AG04449 (cell line): ENCODE measurements at regions of chr16 and their contacts with region 1.

Region 1: GRCh38 chr16:84970447-84971127 is 40.7 kb downstream of the ZDHHC7 start:
- DNase-seq: peak; percentile 16
- H3K4me3 ChIP-seq: no peak overlapping the region
- CTCF ChIP-seq: peak; percentile 87

Region 2: GRCh38 chr16:84746882-84747281 is 223.7 kb before region 1 on chr16:
- CTCF ChIA-PET with region 1: interaction called, 475 read pairs
- POLR2A ChIA-PET with region 1: no interaction called
- DNase-seq: no peak
- H3K4me3 ChIP-seq: no peak overlapping the region
- CTCF ChIP-seq: peak; percentile 18

Region 3: DNA sequence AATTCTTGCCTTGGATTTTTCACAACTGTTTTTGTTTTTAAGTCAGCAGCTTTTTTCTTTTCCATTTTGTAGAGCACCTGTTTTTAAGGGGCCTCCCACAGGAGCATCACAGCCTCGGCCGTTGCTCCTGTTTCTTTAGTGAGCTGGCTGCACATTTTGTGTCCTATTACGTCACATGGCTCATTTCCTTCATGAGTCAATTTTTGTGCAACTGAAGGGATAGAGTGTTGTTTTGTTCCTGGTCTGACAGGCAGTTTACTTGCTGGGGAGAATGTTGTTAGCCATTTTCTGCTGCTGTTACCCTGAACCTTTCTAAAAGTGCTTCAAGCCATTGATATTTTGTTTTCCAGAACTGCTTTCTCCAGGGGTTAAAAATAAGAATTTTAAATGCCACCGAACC is 195.8 kb before region 1 on chr16:
- CTCF ChIA-PET with region 1: interaction called, 17 read pairs
- POLR2A ChIA-PET with region 1: no interaction called
- DNase-seq: peak; percentile 53
- H3K4me3 ChIP-seq: no peak overlapping the region
- CTCF ChIP-seq: no peak

Region 4: GRCh38 chr16:84952335-84953189 is 18.0 kb before region 1 on chr16:
- CTCF ChIA-PET with region 1: interaction called, 184 read pairs
- POLR2A ChIA-PET with region 1: no interaction called
- DNase-seq: no peak
- H3K4me3 ChIP-seq: no peak overlapping the region
- CTCF ChIP-seq: peak; percentile 86

Region 5: DNA sequence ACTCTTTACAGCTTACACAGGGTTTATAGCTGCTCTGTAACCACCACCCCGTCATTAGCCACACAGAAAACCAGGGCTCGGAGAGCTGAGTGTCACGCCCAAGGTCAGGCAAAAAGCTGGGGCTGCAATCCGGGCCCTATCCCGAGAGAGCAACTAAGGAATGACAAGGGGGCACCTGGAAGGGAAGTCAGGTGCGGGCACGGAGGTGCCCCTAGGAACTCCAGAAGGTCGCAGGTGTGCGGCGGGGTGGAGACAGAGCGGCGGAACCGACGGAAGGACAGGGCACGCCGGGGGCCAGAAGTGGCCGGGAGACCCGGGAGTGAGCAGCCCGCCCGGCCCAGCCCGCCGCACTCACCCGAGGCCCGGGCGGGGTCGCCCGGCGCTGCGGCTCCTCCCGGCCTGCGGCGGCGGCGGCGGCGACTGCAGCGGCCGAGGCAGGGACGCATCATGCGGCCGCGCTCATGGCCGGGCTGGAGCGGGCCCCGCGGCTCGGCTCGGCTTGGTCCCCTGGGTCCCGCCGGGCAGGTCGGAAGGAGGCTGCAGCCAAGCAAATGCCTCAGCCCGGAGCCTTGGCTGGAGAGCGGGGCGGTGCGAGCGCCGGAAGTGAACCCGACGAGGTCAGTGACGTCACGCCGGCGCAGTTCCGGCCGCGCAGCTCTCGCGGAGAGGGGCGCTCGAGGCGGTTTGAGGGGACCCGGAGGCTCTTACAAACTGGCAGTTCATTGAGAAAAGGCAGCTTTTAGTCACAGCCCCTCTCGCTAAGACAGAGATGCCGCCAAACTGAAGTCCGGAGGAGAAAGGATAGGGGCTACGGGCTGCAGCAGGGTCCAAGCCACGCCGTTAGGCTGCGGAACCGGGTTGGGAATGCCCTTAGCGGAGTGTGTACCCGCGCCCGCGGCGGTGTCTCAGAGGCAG is 40.6 kb after region 1 on chr16 and contains the start of gene ZDHHC7:
- CTCF ChIA-PET with region 1: interaction called, 24 read pairs
- POLR2A ChIA-PET with region 1: no interaction called
- DNase-seq: no peak
- H3K4me3 ChIP-seq: peak within 1 kb of the TSS; percentile 91
- CTCF ChIP-seq: no peak

Region 6: GRCh38 chr16:85136702-85137322 is 166.2 kb after region 1 on chr16:
- CTCF ChIA-PET with region 1: no interaction called
- POLR2A ChIA-PET with region 1: no interaction called
- DNase-seq: no peak
- H3K4me3 ChIP-seq: peak overlapping the region; percentile 15; the same call in 1 of the 2 replicates
- CTCF ChIP-seq: no peak